SK-N-SH (cell line): ENCODE measurements at regions of chr17 and their contacts with region 1.

Region 1: GRCh38 chr17:67376737-67377487 is at the start of gene PITPNC1:
- DNase-seq: peak; percentile 94
- H3K4me3 ChIP-seq: peak within 1 kb of the TSS; percentile 74 to 95
- H3K27ac ChIP-seq: peak within 1 kb of the TSS; percentile 97 to 98
- H3K4me1 ChIP-seq: peaks cover 16 to 21% of the 10 kb centered on the region in 2 experiments; a peak in 3 of 4 replicates
- H3K27me3 ChIP-seq: no peaks in the 10 kb centered on the region
- CTCF ChIP-seq: no peak
- EP300 ChIP-seq: no peak; a peak in 1 of 4 replicates
- RAD21 ChIP-seq: 0 out of 2 replicates have a peak, but pooled peaks have one; percentile 16
- polyA plus RNA-seq, gene PITPNC1: 14.0 and 18.4 TPM in 2 replicates

Region 2: DNA sequence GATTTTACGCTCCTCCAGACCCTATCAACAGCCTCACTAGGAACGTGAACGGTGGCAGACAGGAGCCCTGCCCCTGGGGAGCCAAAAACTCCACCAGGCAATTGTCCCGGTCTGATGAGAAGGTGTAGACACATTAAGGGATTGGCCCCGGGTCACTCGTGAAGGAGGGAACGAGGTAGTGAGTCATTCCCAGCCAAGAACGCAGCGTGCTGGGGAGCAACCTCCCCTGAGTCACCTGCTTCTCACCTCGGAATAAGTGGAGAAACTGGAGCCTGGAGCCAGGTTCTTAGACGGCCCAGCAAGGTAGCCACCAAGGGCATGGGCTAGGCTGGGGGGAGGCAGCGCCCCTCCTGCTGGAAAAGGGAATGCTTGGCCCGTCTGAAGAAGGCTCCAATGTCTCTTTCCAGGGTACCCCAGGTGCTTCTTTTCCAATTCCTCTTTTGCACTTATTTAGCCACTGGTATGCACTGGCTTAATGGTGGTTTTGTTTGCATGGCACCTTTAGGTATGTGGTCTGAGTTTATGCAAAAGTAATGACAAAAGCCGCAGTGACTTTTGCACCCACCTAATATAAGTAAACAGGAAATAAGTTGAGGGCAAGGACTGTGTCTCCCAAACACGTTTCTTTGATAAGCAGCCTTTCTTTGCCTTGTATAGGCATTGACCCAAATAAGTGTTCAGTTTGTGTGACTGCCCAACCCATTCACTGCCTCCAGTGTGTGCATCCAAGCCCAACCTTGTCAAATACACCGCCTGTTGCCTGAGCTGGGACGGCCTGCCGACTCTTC is 130.1 kb before region 1 on chr17:
- CTCF ChIA-PET with region 1: no interaction called
- POLR2A ChIA-PET with region 1: no interaction called
- DNase-seq: peak; percentile 33
- H3K4me3 ChIP-seq: peak overlapping the region; percentile 92
- H3K27ac ChIP-seq: no peak overlapping the region
- H3K4me1 ChIP-seq: peaks cover 7 to 18% of the 10 kb centered on the region in 2 experiments; a peak in 3 of 4 replicates
- H3K27me3 ChIP-seq: no peaks in the 10 kb centered on the region
- CTCF ChIP-seq: no peak
- EP300 ChIP-seq: no peak
- RAD21 ChIP-seq: no peak

Region 3: DNA sequence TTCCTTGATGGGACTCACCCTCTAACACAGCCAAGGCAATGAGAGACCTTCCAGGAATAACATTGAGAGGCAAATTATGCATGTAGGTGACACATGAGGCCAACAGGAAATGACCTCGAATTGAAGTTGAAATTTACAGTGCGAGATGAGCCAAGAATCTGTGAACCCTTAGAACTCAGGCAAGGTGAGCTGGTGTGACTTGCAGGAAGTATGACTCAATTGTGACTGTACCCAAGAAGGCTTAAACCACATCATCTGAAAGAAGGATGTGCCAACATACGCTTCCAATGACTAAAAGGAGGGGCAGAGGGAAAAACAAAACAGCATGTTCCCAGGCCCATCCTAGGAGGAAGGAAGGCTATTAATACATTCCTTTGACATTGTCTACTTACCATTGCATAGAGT is 45.0 kb after region 1 on chr17:
- CTCF ChIA-PET with region 1: interaction called, 12 read pairs
- POLR2A ChIA-PET with region 1: no interaction called
- DNase-seq: no peak
- H3K4me3 ChIP-seq: no peak overlapping the region
- H3K27ac ChIP-seq: peak overlapping the region in 1 of 2 experiments; percentile 89; a peak in 2 of 4 replicates
- H3K4me1 ChIP-seq: peaks cover 2 to 16% of the 10 kb centered on the region in 2 experiments; a peak in 2 of 4 replicates
- H3K27me3 ChIP-seq: no peaks in the 10 kb centered on the region
- CTCF ChIP-seq: no peak
- EP300 ChIP-seq: peak in 1 of 2 experiments; percentile 96; a peak in 2 of 4 replicates
- RAD21 ChIP-seq: no peak

Region 4: DNA sequence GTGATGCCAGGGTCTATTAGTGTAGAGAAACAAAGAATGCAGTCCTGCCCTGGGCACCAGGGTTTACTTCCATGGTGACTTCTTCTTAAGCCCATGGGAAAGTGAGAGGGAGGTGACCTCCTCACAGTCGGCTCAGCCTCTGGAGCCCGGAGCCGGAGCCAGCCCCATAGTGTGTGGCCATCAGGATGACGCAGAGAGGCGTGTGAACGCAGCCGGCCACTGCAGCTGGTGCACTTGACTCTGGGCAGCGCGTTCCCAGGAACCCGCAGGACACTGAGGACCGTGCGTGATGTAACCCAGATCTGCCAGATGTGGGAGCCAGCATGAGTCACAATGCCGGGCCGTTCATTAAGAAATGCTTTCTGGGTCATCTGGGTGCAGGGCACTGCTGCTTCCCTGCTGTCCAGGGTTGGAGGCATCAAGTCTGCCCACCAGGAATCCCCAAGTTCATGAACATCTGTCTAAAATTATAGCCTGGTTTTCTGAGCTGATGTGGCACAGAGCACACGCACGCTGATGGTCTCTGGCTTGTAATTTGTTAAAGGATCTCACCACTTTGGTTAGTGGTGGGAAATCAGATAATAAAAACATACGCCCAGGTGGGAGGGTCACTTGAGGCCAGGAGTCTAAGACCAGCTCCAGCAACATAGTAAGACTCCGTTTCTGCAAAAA is 114.2 kb after region 1 on chr17:
- CTCF ChIA-PET with region 1: interaction called, 96 read pairs
- POLR2A ChIA-PET with region 1: interaction called, 17 read pairs
- DNase-seq: peak; percentile 89
- H3K4me3 ChIP-seq: peak overlapping the region; percentile 35 to 44
- H3K27ac ChIP-seq: peak overlapping the region; percentile 84 to 92
- H3K4me1 ChIP-seq: peaks cover 12 to 35% of the 10 kb centered on the region in 2 experiments
- H3K27me3 ChIP-seq: no peaks in the 10 kb centered on the region
- CTCF ChIP-seq: no peak
- EP300 ChIP-seq: peak; percentile 80 to 97; a peak in 3 of 4 replicates
- RAD21 ChIP-seq: peak; percentile 33

Region 5: GRCh38 chr17:67610059-67610458 is 233.1 kb after region 1 on chr17:
- CTCF ChIA-PET with region 1: interaction called, 74 read pairs
- POLR2A ChIA-PET with region 1: interaction called, 9 read pairs
- DNase-seq: no peak
- H3K4me3 ChIP-seq: no peak overlapping the region
- H3K27ac ChIP-seq: no peak overlapping the region; a peak in 1 of 4 replicates
- H3K4me1 ChIP-seq: peaks cover 30% of the 10 kb centered on the region in 2 experiments
- H3K27me3 ChIP-seq: no peaks in the 10 kb centered on the region
- CTCF ChIP-seq: no peak
- EP300 ChIP-seq: no peak
- RAD21 ChIP-seq: no peak

Region 6: GRCh38 chr17:67663460-67663859 is 286.5 kb after region 1 on chr17:
- CTCF ChIA-PET with region 1: interaction called, 10 read pairs
- POLR2A ChIA-PET with region 1: no interaction called
- DNase-seq: no peak
- H3K4me3 ChIP-seq: no peak overlapping the region
- H3K27ac ChIP-seq: no peak overlapping the region
- H3K4me1 ChIP-seq: peaks cover 0 to 10% of the 10 kb centered on the region in 2 experiments; a peak in 1 of 4 replicates
- H3K27me3 ChIP-seq: no peaks in the 10 kb centered on the region
- CTCF ChIP-seq: peak; percentile 16; the same call in 1 of the 2 replicates
- EP300 ChIP-seq: no peak
- RAD21 ChIP-seq: no peak

Region 7: GRCh38 chr17:67717624-67718329 is 340.9 kb after region 1 on chr17 and contains the start of gene NOL11:
- CTCF ChIA-PET with region 1: interaction called, 21 read pairs
- POLR2A ChIA-PET with region 1: interaction called, 6 read pairs
- DNase-seq: peak; percentile 99
- H3K4me3 ChIP-seq: peak within 1 kb of the TSS; percentile 94 to 96
- H3K27ac ChIP-seq: peak within 1 kb of the TSS; percentile 89 to 94
- H3K4me1 ChIP-seq: peaks cover 6 to 7% of the 10 kb centered on the region in 2 experiments; a peak in 3 of 4 replicates
- H3K27me3 ChIP-seq: no peaks in the 10 kb centered on the region
- CTCF ChIP-seq: peak; percentile 98
- EP300 ChIP-seq: peak in 1 of 2 experiments; percentile 28; a peak in 2 of 4 replicates
- RAD21 ChIP-seq: peak; percentile 70
- polyA plus RNA-seq, gene NOL11: 27.0 and 36.2 TPM in 2 replicates

Region 8: GRCh38 chr17:67751101-67752074 is 374.5 kb after region 1 on chr17:
- CTCF ChIA-PET with region 1: no interaction called
- POLR2A ChIA-PET with region 1: no interaction called
- DNase-seq: no peak
- H3K4me3 ChIP-seq: no peak overlapping the region
- H3K27ac ChIP-seq: no peak overlapping the region
- H3K4me1 ChIP-seq: no peaks in the 10 kb centered on the region
- H3K27me3 ChIP-seq: no peaks in the 10 kb centered on the region
- CTCF ChIP-seq: no peak
- EP300 ChIP-seq: no peak
- RAD21 ChIP-seq: no peak